Activated B cell treated with CpG ODN at 0.5 μM for 24 hours (primary cell): ENCODE measurements at regions of chr7 and their contacts with region 1.

Region 1: DNA sequence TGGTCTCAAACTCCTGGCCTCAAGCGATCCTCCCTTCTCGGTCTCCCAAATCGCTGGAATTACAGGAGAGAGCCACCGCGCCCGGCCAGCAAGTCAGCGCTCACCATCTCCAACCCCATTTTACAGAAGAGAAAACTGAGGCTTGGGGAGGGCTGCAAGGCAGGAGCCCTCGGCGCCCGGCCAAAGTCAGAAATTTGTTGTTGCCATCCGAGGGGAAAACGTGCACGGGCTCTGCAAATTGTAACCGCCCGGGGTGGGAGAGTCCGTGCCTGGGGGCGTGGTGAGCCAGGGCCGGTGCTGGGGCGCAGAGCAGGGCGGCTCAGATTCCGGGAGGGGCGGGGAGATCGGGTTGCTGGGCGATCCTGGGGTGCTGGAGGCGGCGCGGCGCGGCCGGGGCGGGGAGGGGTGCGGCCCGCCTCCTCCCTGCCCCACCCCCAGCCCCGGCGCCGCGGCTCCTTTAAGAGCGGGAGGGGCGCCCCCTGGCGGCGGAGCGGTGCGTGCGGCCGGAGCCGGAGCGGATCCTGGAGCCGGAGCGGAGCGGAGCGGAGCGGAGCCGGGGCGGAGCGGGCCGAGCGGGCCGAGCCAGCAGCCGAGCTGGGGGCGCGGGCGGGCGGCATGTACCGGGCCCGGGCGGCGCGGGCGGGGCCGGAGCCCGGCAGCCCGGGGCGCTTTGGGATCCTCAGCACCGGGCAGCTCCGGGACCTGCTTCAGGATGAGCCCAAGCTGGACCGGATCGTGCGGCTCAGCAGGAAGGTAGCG is at the start of gene VPS37D:
- DNase-seq: peak; percentile 97
- ATAC-seq: peak; percentile 91
- H3K4me3 Mint-ChIP-seq: peak within 1 kb of the TSS; percentile 78
- H3K27ac Mint-ChIP-seq: no peak within 1 kb of the TSS
- H3K4me1 Mint-ChIP-seq: peaks cover 6% of the 10 kb centered on the region
- H3K27me3 Mint-ChIP-seq: peaks cover 25% of the 10 kb centered on the region
- CTCF ChIP-seq: no peak
- total RNA-seq, gene VPS37D: 0.17 and 0.24 TPM in 2 replicates

Region 2: DNA sequence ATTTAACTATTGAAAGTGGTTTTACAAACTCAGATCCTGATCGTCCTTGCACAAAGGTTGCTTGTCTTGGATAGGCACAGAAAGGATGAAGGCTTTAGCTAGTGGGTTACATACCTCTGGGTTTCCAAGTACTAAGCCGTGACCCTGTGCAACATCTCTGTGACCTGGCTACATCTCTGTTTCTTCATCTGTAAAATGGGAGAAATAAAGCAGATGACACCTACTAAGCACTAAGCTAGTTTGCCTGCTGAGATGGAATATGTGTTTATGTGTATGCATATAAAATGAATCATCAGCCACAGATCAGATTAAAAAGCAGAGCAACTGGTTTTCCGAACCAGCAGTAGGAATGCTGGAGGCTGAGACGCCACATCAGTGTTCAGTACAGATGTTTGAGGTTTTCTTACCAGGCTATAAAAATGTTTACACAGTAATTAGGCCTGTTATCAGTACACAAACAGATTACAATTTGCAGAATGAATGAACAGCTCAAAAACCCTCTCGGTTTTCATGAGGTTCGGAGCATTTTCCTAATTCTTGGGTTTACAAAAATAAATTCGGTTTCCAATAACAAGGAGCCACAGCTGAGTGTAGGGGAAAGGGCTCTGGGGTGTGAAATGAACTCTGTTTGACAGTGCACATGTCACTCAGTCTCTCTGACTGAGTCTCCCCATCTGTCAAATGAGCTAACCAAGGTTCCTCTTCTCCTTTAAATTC is 1341.2 kb before region 1 on chr7:
- CTCF ChIA-PET with region 1: no interaction called
- POLR2A ChIA-PET with region 1: no interaction called
- intact Hi-C with region 1: no loop called
- DNase-seq: no peak
- ATAC-seq: no peak
- H3K4me3 Mint-ChIP-seq: no peak overlapping the region
- H3K27ac Mint-ChIP-seq: no peak overlapping the region
- H3K4me1 Mint-ChIP-seq: no peaks in the 10 kb centered on the region
- H3K27me3 Mint-ChIP-seq: no peaks in the 10 kb centered on the region
- CTCF ChIP-seq: no peak

Region 3: DNA sequence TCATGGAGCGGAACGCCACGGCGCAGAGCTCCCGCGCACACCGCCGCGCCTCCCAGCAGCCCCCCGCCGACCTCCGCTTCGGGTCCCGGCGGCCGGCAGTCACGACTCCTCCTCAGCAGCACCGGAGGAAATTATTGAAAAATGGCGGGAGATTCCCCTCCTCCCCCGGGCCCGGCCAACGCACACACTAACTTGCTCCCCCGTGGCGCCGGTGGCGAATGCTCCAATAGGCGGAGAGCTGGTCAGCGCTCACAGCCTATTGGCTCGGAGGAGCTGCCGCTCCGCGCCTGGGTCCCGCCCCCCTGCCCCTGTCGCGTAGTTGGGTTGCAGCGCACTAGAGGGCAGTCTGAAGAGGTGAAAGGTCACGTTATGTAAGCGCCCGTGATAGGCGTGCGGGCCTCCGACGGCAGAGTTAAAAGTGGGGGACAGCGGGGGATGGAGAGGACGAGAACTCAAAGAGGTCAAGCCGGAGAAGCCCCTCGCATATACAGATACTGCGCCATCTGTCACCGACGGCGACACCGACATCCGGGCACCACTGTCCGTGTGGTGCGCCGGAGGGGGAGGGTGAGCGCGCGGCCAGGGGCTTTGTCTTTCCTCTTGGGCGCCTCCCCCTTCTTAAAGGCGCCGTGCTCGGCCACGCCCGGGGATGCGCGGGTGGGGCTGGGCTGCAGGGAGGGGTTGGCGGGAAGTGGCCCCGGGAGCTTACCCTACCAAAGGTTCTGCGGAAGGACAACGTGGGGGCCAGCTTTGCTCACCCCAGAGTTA is 145.2 kb before region 1 on chr7 and contains the start of gene BAZ1B:
- CTCF ChIA-PET with region 1: interaction called, 3 read pairs
- POLR2A ChIA-PET with region 1: no interaction called
- intact Hi-C with region 1: loop called (anchors 1 kb)
- DNase-seq: peak; percentile 90
- ATAC-seq: peak; percentile 92
- H3K4me3 Mint-ChIP-seq: peak within 1 kb of the TSS; percentile 95
- H3K27ac Mint-ChIP-seq: peak within 1 kb of the TSS; percentile 97
- H3K4me1 Mint-ChIP-seq: peaks cover 64% of the 10 kb centered on the region
- H3K27me3 Mint-ChIP-seq: no peaks in the 10 kb centered on the region
- CTCF ChIP-seq: no peak
- total RNA-seq, gene BAZ1B: 53.6 and 59.1 TPM in 2 replicates

Region 4: DNA sequence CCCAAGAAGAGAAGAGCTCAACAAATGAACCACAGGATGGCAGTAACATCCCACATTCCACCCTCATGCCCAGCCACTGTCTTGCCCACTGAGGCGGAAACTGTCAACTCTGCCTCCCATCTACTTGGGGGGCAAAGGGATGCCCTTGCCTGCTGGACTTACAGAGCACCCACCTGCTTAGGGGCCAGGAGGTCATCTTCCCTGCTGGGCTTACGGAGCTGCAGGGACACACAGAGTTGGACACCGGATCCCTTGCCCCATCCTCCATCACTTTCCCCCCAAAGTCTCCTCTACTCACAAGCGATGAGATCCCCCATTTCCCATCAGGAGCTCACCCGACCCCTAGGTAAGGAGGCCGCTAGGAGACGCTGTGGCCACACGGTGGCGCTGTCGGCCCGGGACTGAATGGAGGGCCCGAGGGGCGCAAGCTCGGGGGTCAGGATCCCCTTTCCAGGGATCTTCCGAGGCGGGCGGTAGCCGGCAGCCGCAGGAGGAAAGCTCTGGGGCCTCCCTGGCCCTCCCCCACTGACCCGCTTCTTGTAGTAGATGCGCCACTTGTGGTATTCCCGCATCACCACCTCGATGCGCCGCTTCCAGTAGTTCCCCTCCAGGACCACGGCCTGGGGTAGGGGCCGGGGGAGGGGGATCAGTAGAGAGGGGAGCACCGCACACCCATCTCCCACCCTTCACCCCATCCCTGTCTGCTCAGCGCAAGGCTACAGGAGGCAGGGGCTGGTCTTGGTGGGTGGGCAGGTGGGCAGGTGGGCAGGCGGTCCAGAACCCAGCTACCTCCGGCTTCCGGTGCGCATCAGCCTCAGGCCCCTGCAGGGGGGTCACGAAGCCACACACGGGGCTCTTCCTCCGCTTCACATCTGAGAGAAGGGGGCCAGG is 60.5 kb before region 1 on chr7:
- CTCF ChIA-PET with region 1: no interaction called
- POLR2A ChIA-PET with region 1: no interaction called
- intact Hi-C with region 1: loop called (anchors 1 kb)
- DNase-seq: peak; percentile 66
- ATAC-seq: peak; percentile 67
- H3K4me3 Mint-ChIP-seq: no peak overlapping the region
- H3K27ac Mint-ChIP-seq: no peak overlapping the region
- H3K4me1 Mint-ChIP-seq: peaks cover 1% of the 10 kb centered on the region
- H3K27me3 Mint-ChIP-seq: peaks cover 39% of the 10 kb centered on the region
- CTCF ChIP-seq: no peak

Region 5: GRCh38 chr7:73703757-73704639 is 36.5 kb after region 1 on chr7:
- CTCF ChIA-PET with region 1: no interaction called
- POLR2A ChIA-PET with region 1: interaction called, 4 read pairs
- intact Hi-C with region 1: loop called (anchors 1 kb)
- DNase-seq: no peak
- ATAC-seq: peak; percentile 67
- H3K4me3 Mint-ChIP-seq: no peak overlapping the region
- H3K27ac Mint-ChIP-seq: no peak overlapping the region
- H3K4me1 Mint-ChIP-seq: peaks cover 16% of the 10 kb centered on the region
- H3K27me3 Mint-ChIP-seq: peaks cover 8% of the 10 kb centered on the region
- CTCF ChIP-seq: no peak

Region 6: DNA sequence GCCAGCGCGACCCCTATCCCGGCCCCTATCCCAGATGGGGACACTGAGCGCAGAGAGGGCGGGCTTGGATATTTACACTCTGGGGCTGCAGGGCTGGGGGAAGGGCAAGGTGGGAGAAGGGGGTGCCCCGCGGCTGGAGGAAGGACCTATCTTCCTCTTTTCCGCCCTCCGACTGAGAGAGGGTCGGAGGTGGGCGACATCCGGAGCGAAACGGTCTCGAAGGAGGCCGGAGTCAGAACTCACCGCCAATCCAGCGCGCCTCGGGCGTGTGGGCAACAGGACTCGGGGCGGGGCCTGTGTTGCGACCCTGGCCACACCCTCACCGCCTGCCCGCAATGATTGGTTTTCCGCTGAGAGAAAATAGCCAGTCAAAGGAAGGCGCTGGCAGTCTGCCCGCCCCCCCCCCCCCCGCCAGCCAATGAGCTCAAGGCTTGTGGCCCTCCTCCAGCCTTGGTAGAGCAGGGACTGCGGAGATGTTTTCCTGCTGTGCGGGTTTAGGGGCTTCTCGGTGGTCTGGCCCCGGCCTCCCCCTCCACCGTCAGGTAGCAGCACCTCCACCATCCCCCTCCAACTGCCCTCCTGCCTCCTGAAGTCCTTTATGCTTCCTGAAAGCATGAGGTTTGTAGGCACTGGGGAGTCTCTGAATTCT is 174.8 kb after region 1 on chr7 and contains the start of gene METTL27:
- CTCF ChIA-PET with region 1: no interaction called
- POLR2A ChIA-PET with region 1: no interaction called
- intact Hi-C with region 1: loop called (anchors 5 kb)
- DNase-seq: peak; percentile 74
- ATAC-seq: peak; percentile 100
- H3K4me3 Mint-ChIP-seq: peak within 1 kb of the TSS; percentile 86
- H3K27ac Mint-ChIP-seq: peak within 1 kb of the TSS; percentile 73
- H3K4me1 Mint-ChIP-seq: peaks cover 32% of the 10 kb centered on the region
- H3K27me3 Mint-ChIP-seq: no peaks in the 10 kb centered on the region
- CTCF ChIP-seq: no peak
- total RNA-seq, gene METTL27: 0.66 and 1.7 TPM in 2 replicates

Region 7: DNA sequence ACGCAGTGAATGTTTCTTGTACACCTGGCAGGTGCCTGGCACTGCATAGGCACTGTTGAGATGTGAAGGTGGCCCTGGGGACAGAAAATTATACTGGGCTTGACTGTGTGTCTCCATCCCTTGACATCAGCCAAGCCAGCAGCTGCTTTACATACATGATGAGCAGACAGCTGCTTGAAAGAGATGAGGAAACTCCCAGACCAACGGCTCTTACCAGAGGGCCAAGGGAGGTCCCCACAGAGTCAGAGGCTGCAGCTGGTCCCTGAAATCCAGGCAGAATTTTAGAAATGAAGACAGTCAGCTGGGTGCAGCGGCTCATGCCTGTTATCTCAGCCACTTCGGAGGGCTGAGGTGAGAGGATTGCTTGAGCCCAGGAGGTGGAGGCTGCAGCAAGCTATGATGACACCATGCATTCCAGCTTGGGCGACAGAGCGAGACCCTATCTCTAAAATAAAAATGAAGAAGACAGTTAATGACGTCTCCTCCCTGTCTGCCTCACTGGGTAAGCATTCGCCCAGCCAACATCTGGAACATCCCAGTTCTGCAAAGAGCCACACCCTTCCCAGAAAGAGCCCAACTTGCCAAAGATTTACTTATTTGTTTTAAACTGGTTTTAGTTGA is 433.6 kb after region 1 on chr7:
- CTCF ChIA-PET with region 1: no interaction called
- POLR2A ChIA-PET with region 1: no interaction called
- intact Hi-C with region 1: no loop called
- DNase-seq: peak; percentile 60
- ATAC-seq: peak; percentile 79
- H3K4me3 Mint-ChIP-seq: peak overlapping the region; percentile 70
- H3K27ac Mint-ChIP-seq: peak overlapping the region; percentile 98
- H3K4me1 Mint-ChIP-seq: peaks cover 38% of the 10 kb centered on the region
- H3K27me3 Mint-ChIP-seq: no peaks in the 10 kb centered on the region
- CTCF ChIP-seq: no peak